Mammary epithelial cell (primary cell): ENCODE measurements at regions of chr1 and their contacts with region 1.

Region 1: DNA sequence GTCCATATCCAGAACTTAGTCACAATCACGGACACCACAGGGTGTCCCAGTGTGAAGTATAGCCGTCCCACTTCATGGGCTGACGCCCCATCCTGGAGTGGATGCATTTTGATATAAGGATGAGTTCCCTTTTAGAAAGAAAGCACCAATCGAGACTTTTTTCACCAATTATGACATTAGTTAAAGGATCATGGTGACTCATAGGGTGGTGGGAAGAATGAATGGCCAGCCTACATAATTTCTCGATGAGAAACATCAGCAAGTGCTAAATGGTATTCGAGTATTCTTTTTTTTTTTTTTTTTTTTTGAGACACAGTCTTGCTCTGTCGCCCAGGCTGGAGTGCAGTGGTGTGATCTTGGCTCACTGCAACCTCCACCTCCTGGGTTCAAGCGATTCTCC is 38.5 kb upstream of the USP1 start:
- DNase-seq: peak; percentile 86
- H3K4me3 ChIP-seq: no peak overlapping the region
- H3K27ac ChIP-seq: no peak overlapping the region
- H3K4me1 ChIP-seq: peaks cover 17% of the 10 kb centered on the region
- H3K27me3 ChIP-seq: no peaks in the 10 kb centered on the region
- CTCF ChIP-seq: no peak

Region 2: DNA sequence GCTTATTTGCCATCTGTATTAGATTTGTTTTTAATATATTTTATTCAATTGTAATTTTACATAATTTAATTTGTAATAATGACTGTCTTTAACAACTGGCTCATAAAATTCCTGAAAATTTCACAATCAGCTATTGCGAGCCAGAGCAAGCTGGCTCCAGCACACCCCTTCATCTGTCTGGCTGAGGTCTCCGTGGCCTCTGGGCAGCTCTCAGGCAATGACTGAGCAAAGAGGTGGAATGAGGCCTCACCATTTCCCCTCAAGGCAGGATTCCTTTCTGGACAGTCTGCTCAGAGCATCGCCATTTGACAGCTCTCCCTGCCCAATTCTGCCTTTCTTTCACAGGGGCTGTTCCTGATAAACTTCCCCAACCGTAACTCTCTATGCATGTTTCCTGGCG is 73.3 kb before region 1 on chr1:
- CTCF ChIA-PET with region 1: no interaction called
- dilution Hi-C with region 1: no loop called
- in situ Hi-C with region 1: no loop called
- intact Hi-C with region 1: loop called (anchors 5 kb)
- DNase-seq: peak; percentile 94
- H3K4me3 ChIP-seq: peak overlapping the region in 1 of 3 experiments; percentile 29
- H3K27ac ChIP-seq: peak overlapping the region; percentile 86
- H3K4me1 ChIP-seq: peaks cover 32% of the 10 kb centered on the region
- H3K27me3 ChIP-seq: no peaks in the 10 kb centered on the region
- CTCF ChIP-seq: no peak

Region 3: GRCh38 chr1:62337706-62338631 is 60.4 kb before region 1 on chr1:
- CTCF ChIA-PET with region 1: no interaction called
- dilution Hi-C with region 1: loop called (anchors 5 kb)
- in situ Hi-C with region 1: no loop called
- intact Hi-C with region 1: no loop called
- DNase-seq: no peak
- H3K4me3 ChIP-seq: no peak overlapping the region
- H3K27ac ChIP-seq: no peak overlapping the region
- H3K4me1 ChIP-seq: peaks cover 19% of the 10 kb centered on the region
- H3K27me3 ChIP-seq: no peaks in the 10 kb centered on the region
- CTCF ChIP-seq: peak in 1 of 2 donors; percentile 17

Region 4: DNA sequence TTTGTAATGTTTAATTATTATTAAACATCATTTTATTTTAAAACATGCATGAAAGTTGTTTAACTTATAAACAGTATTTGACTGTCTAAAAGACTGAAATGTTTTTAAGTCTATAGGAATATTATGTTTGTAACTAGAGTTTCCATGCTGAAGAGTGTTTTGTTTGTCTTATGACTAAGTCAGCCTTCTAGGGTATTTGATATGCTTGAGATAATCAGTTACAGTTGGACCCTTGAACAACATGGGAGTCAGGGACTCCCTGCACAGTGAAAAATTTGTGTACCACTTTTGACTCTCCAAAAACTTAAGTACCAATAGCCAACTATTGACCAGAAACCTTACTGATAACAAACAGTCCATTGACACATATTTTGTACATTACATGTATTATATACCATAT is 33.7 kb before region 1 on chr1:
- CTCF ChIA-PET with region 1: no interaction called
- dilution Hi-C with region 1: loop called (anchors 5 kb)
- in situ Hi-C with region 1: no loop called
- intact Hi-C with region 1: no loop called
- DNase-seq: no peak
- H3K4me3 ChIP-seq: no peak overlapping the region
- H3K27ac ChIP-seq: no peak overlapping the region
- H3K4me1 ChIP-seq: no peaks in the 10 kb centered on the region
- H3K27me3 ChIP-seq: no peaks in the 10 kb centered on the region
- CTCF ChIP-seq: no peak

Region 5: GRCh38 chr1:62436466-62437256 is 38.3 kb after region 1 on chr1 and contains the start of gene USP1:
- CTCF ChIA-PET with region 1: no interaction called
- dilution Hi-C with region 1: no loop called
- in situ Hi-C with region 1: no loop called
- intact Hi-C with region 1: loop called (anchors 2 kb)
- DNase-seq: peak; percentile 100
- H3K4me3 ChIP-seq: peak within 1 kb of the TSS; percentile 64 to 88 (median 76)
- H3K27ac ChIP-seq: peak within 1 kb of the TSS; percentile 98
- H3K4me1 ChIP-seq: peaks cover 8% of the 10 kb centered on the region
- H3K27me3 ChIP-seq: no peaks in the 10 kb centered on the region
- CTCF ChIP-seq: no peak
- total RNA-seq, gene USP1: 15.3 to 36.4 TPM

Region 6: GRCh38 chr1:62467092-62467491 is 68.7 kb after region 1 on chr1:
- CTCF ChIA-PET with region 1: no interaction called
- dilution Hi-C with region 1: no loop called
- in situ Hi-C with region 1: no loop called
- intact Hi-C with region 1: no loop called
- DNase-seq: no peak
- H3K4me3 ChIP-seq: no peak overlapping the region
- H3K27ac ChIP-seq: no peak overlapping the region
- H3K4me1 ChIP-seq: no peaks in the 10 kb centered on the region
- H3K27me3 ChIP-seq: no peaks in the 10 kb centered on the region
- CTCF ChIP-seq: no peak

Region 7: DNA sequence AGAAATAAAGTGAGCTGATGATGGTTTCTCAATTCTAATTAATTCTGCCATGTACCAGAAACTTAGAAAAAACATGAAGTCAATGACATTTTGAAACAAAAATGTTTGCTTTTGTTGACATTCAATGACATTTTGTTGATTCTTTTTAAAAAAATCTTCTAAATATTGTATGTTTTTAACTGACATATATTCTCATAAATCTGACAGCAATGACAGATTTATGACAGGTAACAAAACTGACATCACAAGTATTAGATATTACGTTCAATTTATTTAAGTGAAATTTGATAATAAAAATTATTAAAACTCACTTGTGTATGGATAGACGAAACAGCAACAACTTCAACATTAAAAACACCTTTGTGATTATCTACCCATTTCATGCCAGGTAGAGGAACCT is 162.9 kb after region 1 on chr1:
- CTCF ChIA-PET with region 1: no interaction called
- dilution Hi-C with region 1: no loop called
- in situ Hi-C with region 1: no loop called
- intact Hi-C with region 1: no loop called
- DNase-seq: no peak
- H3K4me3 ChIP-seq: no peak overlapping the region
- H3K27ac ChIP-seq: no peak overlapping the region
- H3K4me1 ChIP-seq: no peaks in the 10 kb centered on the region
- H3K27me3 ChIP-seq: no peaks in the 10 kb centered on the region
- CTCF ChIP-seq: no peak